ENCODE measurements at regions of chr2 and their contacts with region 1.

Region 1: GRCh38 chr2:160109936-160110673 is 47.7 kb upstream of the PLA2R1 start:
- DNase-seq: peak; percentile 80
- ATAC-seq: peak; percentile 97
- H3K4me3 ChIP-seq: no peak overlapping the region
- H3K27ac ChIP-seq: no peak overlapping the region
- H3K4me1 ChIP-seq: no peaks in the 10 kb centered on the region
- H3K27me3 ChIP-seq: peaks cover 2% of the 10 kb centered on the region; the same call in 1 of the 2 replicates
- CTCF ChIP-seq: peak; percentile 92
- POLR2A ChIP-seq: 0 out of 2 replicates have a peak, but pooled peaks have one; percentile 35
- RAD21 ChIP-seq: peak; percentile 99

Region 2: DNA sequence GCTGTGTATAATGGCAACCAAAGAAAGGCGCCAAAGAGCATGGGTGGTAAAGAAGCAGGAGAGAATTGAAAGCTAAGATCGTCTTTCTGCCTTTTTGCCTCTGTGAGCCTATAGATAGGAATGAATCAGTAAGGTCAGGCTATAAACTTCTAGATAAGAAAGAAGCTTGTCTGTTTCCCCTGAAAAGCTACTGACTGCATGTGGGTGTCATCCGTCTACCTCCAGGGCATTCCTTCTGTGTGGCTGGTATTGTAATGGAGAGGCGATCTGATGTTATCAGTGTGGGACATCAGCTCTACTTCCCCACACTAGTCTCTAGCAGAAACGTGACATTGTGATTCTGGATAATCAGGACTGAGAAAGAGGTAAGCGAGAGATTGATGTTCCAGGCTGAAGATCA is 15.7 kb after region 1 on chr2:
- CTCF ChIA-PET with region 1: no interaction called
- POLR2A ChIA-PET with region 1: no interaction called
- dilution Hi-C with region 1: no loop called
- in situ Hi-C with region 1: no loop called
- intact Hi-C with region 1: no loop called
- DNase-seq: no peak
- ATAC-seq: no peak
- H3K4me3 ChIP-seq: no peak overlapping the region
- H3K27ac ChIP-seq: no peak overlapping the region
- H3K4me1 ChIP-seq: no peaks in the 10 kb centered on the region
- H3K27me3 ChIP-seq: peaks cover 8% of the 10 kb centered on the region
- CTCF ChIP-seq: no peak
- POLR2A ChIP-seq: no peak
- RAD21 ChIP-seq: no peak

Region 3: GRCh38 chr2:160210599-160211138 is 100.6 kb after region 1 on chr2:
- CTCF ChIA-PET with region 1: interaction called, 6 read pairs
- POLR2A ChIA-PET with region 1: no interaction called
- dilution Hi-C with region 1: no loop called
- in situ Hi-C with region 1: no loop called
- intact Hi-C with region 1: loop called (anchors 2 kb)
- DNase-seq: peak; percentile 38
- ATAC-seq: no peak
- H3K4me3 ChIP-seq: no peak overlapping the region
- H3K27ac ChIP-seq: peak overlapping the region; percentile 32; the same call in 1 of the 2 replicates
- H3K4me1 ChIP-seq: peaks cover 28% of the 10 kb centered on the region
- H3K27me3 ChIP-seq: no peaks in the 10 kb centered on the region
- CTCF ChIP-seq: peak; percentile 54
- POLR2A ChIP-seq: no peak
- RAD21 ChIP-seq: peak; percentile 39

Region 4: DNA sequence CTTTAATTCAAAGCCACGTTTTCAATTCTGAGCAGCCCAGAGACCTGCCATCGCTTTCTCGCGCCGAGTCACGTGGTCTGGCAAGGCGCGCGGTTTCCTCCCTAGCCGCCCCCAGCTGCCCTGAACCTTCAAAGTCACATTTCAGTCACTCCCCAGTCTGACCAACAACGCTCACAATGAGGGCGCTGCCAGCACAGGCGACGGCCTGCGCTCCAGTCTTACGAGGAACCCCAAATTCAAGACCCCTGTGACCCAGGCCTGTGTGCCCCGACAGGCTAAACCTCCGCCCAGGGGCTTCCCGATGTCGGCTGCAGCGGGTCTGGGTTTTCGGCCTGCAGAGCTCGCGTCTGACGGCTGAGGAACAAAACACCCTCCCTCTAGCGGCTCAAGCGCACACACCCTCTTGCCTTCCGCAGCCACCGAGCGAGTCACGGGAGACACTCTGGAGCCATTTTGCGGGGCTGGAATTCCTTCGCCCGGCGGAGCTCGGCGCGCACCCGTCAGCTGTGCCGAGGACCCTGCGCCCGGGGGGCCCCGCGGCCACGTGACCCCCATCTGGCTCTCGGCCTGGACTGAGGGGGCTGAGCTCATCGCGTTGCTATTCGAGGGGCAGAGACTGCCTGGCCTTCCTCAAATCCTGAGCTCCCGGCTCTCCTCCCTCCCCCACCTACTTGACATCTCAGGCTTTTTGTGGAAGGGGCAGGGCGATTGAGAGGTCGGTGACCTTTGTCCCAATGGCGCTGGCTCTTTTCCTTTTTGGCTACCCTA is 159.9 kb after region 1 on chr2:
- CTCF ChIA-PET with region 1: interaction called, 7 read pairs
- POLR2A ChIA-PET with region 1: no interaction called
- dilution Hi-C with region 1: no loop called
- in situ Hi-C with region 1: no loop called
- intact Hi-C with region 1: loop called (anchors 1 kb)
- DNase-seq: peak; percentile 92
- ATAC-seq: peak; percentile 91
- H3K4me3 ChIP-seq: peak overlapping the region; percentile 43
- H3K27ac ChIP-seq: peak overlapping the region; percentile 86
- H3K4me1 ChIP-seq: peaks cover 20% of the 10 kb centered on the region
- H3K27me3 ChIP-seq: no peaks in the 10 kb centered on the region
- CTCF ChIP-seq: peak; percentile 68
- POLR2A ChIP-seq: no peak
- RAD21 ChIP-seq: peak; percentile 57

Region 5: DNA sequence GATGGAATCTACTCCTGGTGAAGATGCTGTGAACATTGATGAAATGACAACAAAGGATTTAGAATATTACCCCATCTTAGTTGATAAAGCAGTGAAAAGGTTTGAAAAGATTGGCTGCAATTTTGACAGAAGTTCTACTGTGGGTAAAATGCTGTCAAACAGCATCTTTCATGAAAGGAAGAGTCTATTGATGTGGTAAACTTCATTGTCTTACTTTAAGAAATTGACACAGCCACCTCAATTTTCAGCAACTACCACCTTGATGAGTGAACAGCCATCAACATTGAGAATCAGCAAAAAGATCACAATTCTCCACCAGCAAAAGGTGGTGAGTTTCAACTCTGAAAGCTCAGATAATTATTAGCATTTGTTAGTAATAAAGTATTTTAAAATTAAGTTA is 693.8 kb after region 1 on chr2:
- CTCF ChIA-PET with region 1: no interaction called
- POLR2A ChIA-PET with region 1: no interaction called
- dilution Hi-C with region 1: no loop called
- in situ Hi-C with region 1: no loop called
- intact Hi-C with region 1: no loop called
- DNase-seq: no peak
- ATAC-seq: no peak
- H3K4me3 ChIP-seq: no peak overlapping the region
- H3K27ac ChIP-seq: no peak overlapping the region
- H3K4me1 ChIP-seq: no peaks in the 10 kb centered on the region
- H3K27me3 ChIP-seq: no peaks in the 10 kb centered on the region
- CTCF ChIP-seq: no peak
- POLR2A ChIP-seq: no peak
- RAD21 ChIP-seq: no peak

Region 6: GRCh38 chr2:160970052-160970965 is 860.2 kb after region 1 on chr2:
- CTCF ChIA-PET with region 1: interaction called, 3 read pairs
- POLR2A ChIA-PET with region 1: no interaction called
- dilution Hi-C with region 1: no loop called
- in situ Hi-C with region 1: no loop called
- intact Hi-C with region 1: loop called (anchors 1 kb)
- DNase-seq: peak; percentile 82
- ATAC-seq: peak; percentile 82
- H3K4me3 ChIP-seq: no peak overlapping the region
- H3K27ac ChIP-seq: peak overlapping the region; percentile 57; the same call in 1 of the 2 replicates
- H3K4me1 ChIP-seq: peaks cover 2% of the 10 kb centered on the region; the same call in 1 of the 2 replicates
- H3K27me3 ChIP-seq: no peaks in the 10 kb centered on the region
- CTCF ChIP-seq: peak; percentile 86
- POLR2A ChIP-seq: no peak
- RAD21 ChIP-seq: peak; percentile 88

Region 7: DNA sequence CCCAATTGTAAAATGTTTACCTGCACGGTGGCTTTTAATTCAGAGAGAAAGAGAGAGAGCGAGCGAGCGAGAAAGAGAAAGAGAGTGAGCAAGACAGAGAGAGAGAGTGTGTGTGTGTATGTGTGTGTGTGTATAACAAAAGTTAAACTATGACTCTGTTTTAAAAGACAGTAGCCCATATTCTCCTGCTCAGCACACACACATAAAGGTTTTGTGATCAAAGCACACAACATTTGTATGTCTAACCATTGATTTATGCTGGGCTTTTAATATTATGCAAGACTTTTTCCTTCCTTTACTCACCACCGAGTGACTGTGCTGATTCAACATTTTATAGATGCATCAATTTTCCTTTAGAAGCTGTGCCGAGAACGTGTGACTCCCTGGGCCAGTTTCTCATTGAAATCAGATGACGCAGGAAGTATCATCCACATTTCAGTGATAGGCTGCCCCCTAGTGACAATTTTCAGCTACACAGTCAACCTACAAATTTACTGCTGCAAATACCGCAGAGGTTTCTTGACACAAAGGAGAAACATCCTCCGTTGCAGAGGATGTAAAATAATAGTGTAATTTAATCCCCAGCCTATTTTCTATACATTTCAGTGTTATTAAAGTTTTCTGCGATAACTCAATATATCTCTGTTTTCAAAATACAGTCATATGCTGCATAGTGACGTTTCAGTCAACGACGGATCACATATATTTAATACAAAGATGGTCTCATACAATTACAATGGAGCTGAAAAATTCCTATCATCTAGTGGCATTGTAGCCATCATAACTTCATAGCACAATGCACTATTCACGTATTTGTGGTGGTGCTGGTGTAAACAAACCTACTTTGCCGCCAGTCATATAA is 884.3 kb after region 1 on chr2:
- CTCF ChIA-PET with region 1: interaction called, 8 read pairs
- POLR2A ChIA-PET with region 1: no interaction called
- dilution Hi-C with region 1: no loop called
- in situ Hi-C with region 1: loop called (anchors 10 kb)
- intact Hi-C with region 1: loop called (anchors 1 kb)
- DNase-seq: peak; percentile 90
- ATAC-seq: peak; percentile 91
- H3K4me3 ChIP-seq: no peak overlapping the region
- H3K27ac ChIP-seq: no peak overlapping the region
- H3K4me1 ChIP-seq: no peaks in the 10 kb centered on the region
- H3K27me3 ChIP-seq: no peaks in the 10 kb centered on the region
- CTCF ChIP-seq: peak; percentile 90
- POLR2A ChIP-seq: no peak
- RAD21 ChIP-seq: peak; percentile 92

Measured in IMR-90 (cell line).